ENCODE measurements at regions of chr11 and their contacts with region 1.

Region 1: DNA sequence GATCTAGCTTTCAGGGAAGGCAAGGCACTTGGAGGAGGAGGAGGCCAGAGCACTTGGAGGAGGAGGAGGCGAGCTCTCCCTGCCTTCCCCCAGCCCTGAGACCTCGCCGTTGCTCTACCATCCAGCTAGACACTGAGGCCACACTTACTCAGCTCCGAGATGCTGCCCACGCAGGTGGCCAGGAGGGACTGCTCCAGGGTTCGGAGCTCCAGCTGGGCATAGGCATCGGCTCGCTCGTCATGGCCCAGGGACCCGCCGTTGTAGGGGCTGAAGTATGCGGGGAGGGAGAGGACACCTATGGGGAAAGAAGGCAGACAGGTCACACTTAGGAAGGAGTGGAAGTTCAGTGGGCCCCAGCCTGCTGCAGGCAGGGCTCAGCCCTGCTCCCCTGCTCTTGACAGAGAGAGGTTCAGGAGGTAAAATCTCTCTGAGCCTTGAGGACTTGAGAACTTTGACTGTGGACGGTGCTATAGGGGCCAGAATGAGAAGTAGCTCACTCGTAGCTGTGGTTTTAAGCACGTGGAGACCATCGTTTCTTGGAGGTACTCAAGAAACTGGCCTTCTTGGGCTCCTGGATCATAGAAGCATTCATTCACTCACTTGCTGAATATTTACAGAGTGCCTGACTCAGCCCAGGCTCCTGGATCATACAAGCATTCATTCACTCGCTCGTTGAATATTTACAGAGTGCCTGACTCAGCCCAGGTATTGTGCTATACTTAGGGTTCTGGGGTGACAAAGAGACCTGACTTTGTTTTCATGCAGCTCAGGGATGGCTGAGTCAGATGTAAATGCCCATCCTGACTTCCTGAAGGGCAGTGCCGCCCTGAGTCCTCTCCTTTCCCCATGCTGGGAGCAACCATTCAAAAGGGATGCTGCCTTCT is 99.2 kb downstream of the NAT10 start:
- DNase-seq: no peak
- ATAC-seq: no peak
- H3K4me3 ChIP-seq: no peak overlapping the region
- H3K4me3 Mint-ChIP-seq: no peak overlapping the region
- H3K27ac ChIP-seq: no peak overlapping the region
- H3K27ac Mint-ChIP-seq: no peak overlapping the region
- H3K4me1 ChIP-seq: peaks cover 7% of the 10 kb centered on the region
- H3K4me1 Mint-ChIP-seq: peaks cover 12% of the 10 kb centered on the region
- H3K27me3 ChIP-seq: no peaks in the 10 kb centered on the region
- H3K27me3 Mint-ChIP-seq: no peaks in the 10 kb centered on the region
- CTCF ChIP-seq: no peak

Region 2: GRCh38 chr11:34065505-34066203 is 139.0 kb before region 1 on chr11:
- CTCF ChIA-PET with region 1: no interaction called
- POLR2A ChIA-PET with region 1: no interaction called
- intact Hi-C with region 1: no loop called
- DNase-seq: peak in 4 of 14 experiments; percentile 4 to 44 (median 23)
- ATAC-seq: peak; percentile 60
- H3K4me3 ChIP-seq: no peak overlapping the region
- H3K4me3 Mint-ChIP-seq: no peak overlapping the region
- H3K27ac ChIP-seq: no peak overlapping the region
- H3K27ac Mint-ChIP-seq: peak overlapping the region; percentile 48
- H3K4me1 ChIP-seq: peaks cover 41% of the 10 kb centered on the region
- H3K4me1 Mint-ChIP-seq: peaks cover 67% of the 10 kb centered on the region
- H3K27me3 ChIP-seq: no peaks in the 10 kb centered on the region
- H3K27me3 Mint-ChIP-seq: no peaks in the 10 kb centered on the region
- CTCF ChIP-seq: no peak

Region 3: GRCh38 chr11:34263440-34264172 is 59.0 kb after region 1 on chr11:
- CTCF ChIA-PET with region 1: no interaction called
- POLR2A ChIA-PET with region 1: no interaction called
- intact Hi-C with region 1: loop called in 1 of 2 experiments (anchors 5 kb)
- DNase-seq: no peak
- ATAC-seq: no peak
- H3K4me3 ChIP-seq: no peak overlapping the region
- H3K4me3 Mint-ChIP-seq: no peak overlapping the region
- H3K27ac ChIP-seq: no peak overlapping the region
- H3K27ac Mint-ChIP-seq: no peak overlapping the region
- H3K4me1 ChIP-seq: peaks cover 4% of the 10 kb centered on the region
- H3K4me1 Mint-ChIP-seq: peaks cover 18% of the 10 kb centered on the region
- H3K27me3 ChIP-seq: no peaks in the 10 kb centered on the region
- H3K27me3 Mint-ChIP-seq: peaks cover 3% of the 10 kb centered on the region
- CTCF ChIP-seq: no peak

Region 4: GRCh38 chr11:34278693-34279297 is 74.2 kb after region 1 on chr11:
- CTCF ChIA-PET with region 1: no interaction called
- POLR2A ChIA-PET with region 1: no interaction called
- intact Hi-C with region 1: no loop called
- DNase-seq: no peak
- ATAC-seq: no peak
- H3K4me3 ChIP-seq: no peak overlapping the region
- H3K4me3 Mint-ChIP-seq: no peak overlapping the region
- H3K27ac ChIP-seq: no peak overlapping the region
- H3K27ac Mint-ChIP-seq: no peak overlapping the region
- H3K4me1 ChIP-seq: no peaks in the 10 kb centered on the region
- H3K4me1 Mint-ChIP-seq: no peaks in the 10 kb centered on the region
- H3K27me3 ChIP-seq: no peaks in the 10 kb centered on the region
- H3K27me3 Mint-ChIP-seq: no peaks in the 10 kb centered on the region
- CTCF ChIP-seq: no peak